ENCODE measurements at regions of chr16 and their contacts with region 1.

Region 1: GRCh38 chr16:57899771-57900661 is 70.9 kb downstream of the CNGB1 start:
- DNase-seq: peak; percentile 76
- H3K4me3 ChIP-seq: no peak overlapping the region
- H3K27ac ChIP-seq: no peak overlapping the region
- H3K4me1 ChIP-seq: no peaks in the 10 kb centered on the region
- H3K27me3 ChIP-seq: peaks cover 50% of the 10 kb centered on the region
- CTCF ChIP-seq: peak; percentile 90

Region 2: GRCh38 chr16:58000706-58001676 is 101.0 kb after region 1 on chr16 and contains the start of gene USB1:
- intact Hi-C with region 1: loop called (anchors 5 kb)
- DNase-seq: peak; percentile 92
- H3K4me3 ChIP-seq: peak within 1 kb of the TSS; percentile 78
- H3K27ac ChIP-seq: peak within 1 kb of the TSS; percentile 96
- H3K4me1 ChIP-seq: peaks cover 52% of the 10 kb centered on the region
- H3K27me3 ChIP-seq: no peaks in the 10 kb centered on the region
- CTCF ChIP-seq: peak; percentile 84
- total RNA-seq, gene USB1: 35.2 TPM